Activated CD4-positive, alpha-beta T cell treated with anti-CD3 and anti-CD28 coated beads for 36 hours (primary cell): ENCODE measurements at regions of chr6 and their contacts with region 1.

Region 1: DNA sequence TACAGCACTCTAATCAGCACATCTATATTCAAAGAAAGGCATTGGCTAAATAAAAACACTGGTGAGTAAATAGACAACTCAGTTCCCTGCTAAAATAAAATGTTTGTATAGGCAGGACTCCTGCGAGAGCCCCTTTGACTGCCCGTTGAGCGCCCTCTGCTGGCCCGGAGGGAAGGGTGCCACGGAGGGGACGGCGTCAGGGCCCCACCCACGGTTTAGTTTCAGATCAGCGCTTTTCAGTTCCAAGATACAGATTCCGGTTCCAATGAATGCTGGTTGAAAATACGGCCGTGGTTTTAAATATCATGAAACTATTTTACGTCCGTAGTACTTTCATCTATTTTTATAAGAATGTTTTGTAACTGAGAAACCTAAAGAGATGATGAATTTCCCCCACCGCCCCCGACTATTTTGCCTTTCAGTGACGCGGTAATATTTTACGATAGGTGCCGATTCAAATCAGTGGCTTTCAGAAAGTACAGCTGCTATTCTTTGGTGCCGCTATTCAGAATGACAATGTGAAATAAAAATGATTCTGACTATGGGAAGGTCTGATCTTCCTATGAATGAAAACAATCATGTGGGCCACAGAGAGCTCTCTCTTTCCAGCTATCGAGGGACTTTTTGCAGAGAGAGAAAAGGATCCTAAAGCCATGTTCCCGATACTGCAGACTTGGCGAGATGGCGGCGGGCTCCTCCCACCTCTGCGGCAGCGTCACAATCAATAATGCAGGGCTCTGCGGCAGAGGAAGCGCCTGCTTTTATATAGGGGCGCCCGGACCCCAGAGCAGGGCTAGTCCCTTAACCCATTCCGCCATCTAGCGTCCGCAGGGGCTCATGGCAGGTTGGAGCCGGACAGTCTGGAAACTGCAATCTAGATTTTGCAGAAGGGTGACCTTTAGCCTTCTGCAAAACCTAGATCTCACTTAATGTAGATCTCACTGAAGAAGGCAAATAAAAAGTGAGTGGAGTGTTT is 10.6 kb upstream of the CCN6 start:
- DNase-seq: peak; percentile 96
- ATAC-seq: peak; percentile 91
- H3K4me3 Mint-ChIP-seq: peak overlapping the region; percentile 93
- H3K27ac Mint-ChIP-seq: peak overlapping the region; percentile 98
- H3K4me1 Mint-ChIP-seq: peaks cover 50% of the 10 kb centered on the region
- H3K27me3 Mint-ChIP-seq: no peaks in the 10 kb centered on the region

Region 2: GRCh38 chr6:111642463-111643158 is 400.7 kb before region 1 on chr6:
- CTCF ChIA-PET with region 1: no interaction called
- POLR2A ChIA-PET with region 1: no interaction called
- intact Hi-C with region 1: loop called in 1 of 2 experiments (anchors 2 kb)
- DNase-seq: peak; percentile 67
- ATAC-seq: peak; percentile 80
- H3K4me3 Mint-ChIP-seq: no peak overlapping the region
- H3K27ac Mint-ChIP-seq: no peak overlapping the region
- H3K4me1 Mint-ChIP-seq: no peaks in the 10 kb centered on the region
- H3K27me3 Mint-ChIP-seq: no peaks in the 10 kb centered on the region

Region 3: GRCh38 chr6:111804627-111805235 is 238.6 kb before region 1 on chr6:
- CTCF ChIA-PET with region 1: interaction called, 7 read pairs
- POLR2A ChIA-PET with region 1: interaction called, 4 read pairs
- intact Hi-C with region 1: loop called (anchors 1 to 2 kb)
- DNase-seq: peak; percentile 83
- ATAC-seq: peak; percentile 62
- H3K4me3 Mint-ChIP-seq: peak overlapping the region; percentile 60
- H3K27ac Mint-ChIP-seq: peak overlapping the region; percentile 98
- H3K4me1 Mint-ChIP-seq: peaks cover 98% of the 10 kb centered on the region
- H3K27me3 Mint-ChIP-seq: no peaks in the 10 kb centered on the region

Region 4: GRCh38 chr6:111973118-111973761 is 70.1 kb before region 1 on chr6:
- CTCF ChIA-PET with region 1: interaction called, 23 read pairs
- POLR2A ChIA-PET with region 1: no interaction called
- intact Hi-C with region 1: no loop called
- DNase-seq: peak; percentile 80
- ATAC-seq: peak; percentile 84
- H3K4me3 Mint-ChIP-seq: peak overlapping the region; percentile 65
- H3K27ac Mint-ChIP-seq: peak overlapping the region; percentile 90
- H3K4me1 Mint-ChIP-seq: peaks cover 73% of the 10 kb centered on the region
- H3K27me3 Mint-ChIP-seq: no peaks in the 10 kb centered on the region

Region 5: GRCh38 chr6:112018619-112019416 is 24.5 kb before region 1 on chr6:
- CTCF ChIA-PET with region 1: interaction called, 54 read pairs
- POLR2A ChIA-PET with region 1: interaction called, 4 read pairs
- intact Hi-C with region 1: loop called (anchors 1 kb)
- DNase-seq: no peak
- ATAC-seq: no peak
- H3K4me3 Mint-ChIP-seq: no peak overlapping the region
- H3K27ac Mint-ChIP-seq: peak overlapping the region; percentile 43
- H3K4me1 Mint-ChIP-seq: peaks cover 78% of the 10 kb centered on the region
- H3K27me3 Mint-ChIP-seq: no peaks in the 10 kb centered on the region

Region 6: DNA sequence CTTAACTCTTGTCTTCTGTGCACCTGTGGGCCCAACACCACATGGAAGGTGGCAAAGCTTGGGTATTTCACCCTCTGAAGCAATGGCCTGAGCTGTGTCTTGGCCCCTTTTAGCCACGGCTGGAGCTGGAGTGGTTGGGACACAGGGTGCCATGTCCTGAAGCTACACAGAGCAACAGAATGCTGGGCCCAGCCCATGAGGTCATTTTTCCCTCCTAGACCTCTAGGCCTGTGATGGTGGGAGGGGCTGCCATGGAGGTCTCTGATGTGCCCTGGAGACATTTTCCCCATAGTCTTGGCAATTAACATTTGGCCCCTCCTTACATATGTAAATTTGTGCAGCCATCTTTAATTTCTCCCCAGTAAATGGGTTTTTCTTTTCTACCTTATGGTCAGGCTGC is 924.7 kb after region 1 on chr6:
- CTCF ChIA-PET with region 1: no interaction called
- POLR2A ChIA-PET with region 1: no interaction called
- intact Hi-C with region 1: no loop called
- DNase-seq: no peak
- ATAC-seq: no peak
- H3K4me3 Mint-ChIP-seq: no peak overlapping the region
- H3K27ac Mint-ChIP-seq: no peak overlapping the region
- H3K4me1 Mint-ChIP-seq: no peaks in the 10 kb centered on the region
- H3K27me3 Mint-ChIP-seq: no peaks in the 10 kb centered on the region